ENCODE measurements at regions of chr6 and their contacts with region 1.

Region 1: DNA sequence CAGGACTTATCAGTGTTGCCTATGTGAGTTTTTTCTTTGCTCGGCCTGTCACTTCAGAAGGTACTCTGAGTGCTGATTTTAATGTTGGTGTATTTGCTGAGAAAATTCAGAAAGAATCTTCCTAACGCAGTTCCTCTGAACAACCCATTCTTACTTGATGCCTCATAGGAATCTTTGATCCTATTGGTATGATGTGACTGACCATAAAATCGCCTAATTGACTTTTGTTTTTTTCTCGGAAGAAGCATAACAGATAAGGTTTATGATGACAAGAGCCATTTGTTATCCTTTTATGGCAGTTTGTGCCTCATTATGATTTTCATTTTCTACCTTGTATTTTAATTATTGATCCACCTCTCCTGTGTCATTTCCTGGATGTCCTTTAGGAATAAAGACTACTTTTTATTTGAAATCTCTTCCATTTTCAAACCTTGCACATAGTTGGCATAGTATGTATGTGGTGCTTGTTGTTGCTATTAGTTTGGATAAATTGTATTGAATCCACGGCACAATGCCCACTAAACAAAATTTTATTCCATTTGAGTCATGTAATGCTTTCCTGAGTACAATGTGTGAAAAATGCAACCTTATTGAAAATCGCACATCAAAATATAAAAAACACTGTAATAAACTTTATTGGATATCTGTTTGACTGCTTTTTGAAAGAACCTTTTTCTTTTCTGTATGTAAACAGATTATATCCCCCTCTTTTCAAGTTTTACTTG is 37.3 kb downstream of the LRRC1 start:
- DNase-seq: no peak
- ATAC-seq: no peak
- H3K4me3 ChIP-seq: no peak overlapping the region
- H3K4me3 Mint-ChIP-seq: no peak overlapping the region
- H3K27ac ChIP-seq: no peak overlapping the region
- H3K27ac Mint-ChIP-seq: no peak overlapping the region
- H3K4me1 ChIP-seq: no peaks in the 10 kb centered on the region
- H3K4me1 Mint-ChIP-seq: no peaks in the 10 kb centered on the region
- H3K27me3 ChIP-seq: no peaks in the 10 kb centered on the region
- H3K27me3 Mint-ChIP-seq: no peaks in the 10 kb centered on the region
- CTCF ChIP-seq: no peak

Region 2: GRCh38 chr6:53815381-53816119 is 16.5 kb before region 1 on chr6:
- CTCF ChIA-PET with region 1: no interaction called
- POLR2A ChIA-PET with region 1: no interaction called
- intact Hi-C with region 1: loop called in 1 of 2 experiments (anchors 1 kb)
- DNase-seq: no peak
- ATAC-seq: no peak
- H3K4me3 ChIP-seq: no peak overlapping the region
- H3K4me3 Mint-ChIP-seq: no peak overlapping the region
- H3K27ac ChIP-seq: no peak overlapping the region
- H3K27ac Mint-ChIP-seq: no peak overlapping the region
- H3K4me1 ChIP-seq: no peaks in the 10 kb centered on the region
- H3K4me1 Mint-ChIP-seq: no peaks in the 10 kb centered on the region
- H3K27me3 ChIP-seq: no peaks in the 10 kb centered on the region
- H3K27me3 Mint-ChIP-seq: no peaks in the 10 kb centered on the region
- CTCF ChIP-seq: no peak

Measured in CD8-positive, alpha-beta T cell (primary cell).